Sigmoid colon (tissue), 7 donors: ENCODE measurements at regions of chr12 and their contacts with region 1.

Region 1: DNA sequence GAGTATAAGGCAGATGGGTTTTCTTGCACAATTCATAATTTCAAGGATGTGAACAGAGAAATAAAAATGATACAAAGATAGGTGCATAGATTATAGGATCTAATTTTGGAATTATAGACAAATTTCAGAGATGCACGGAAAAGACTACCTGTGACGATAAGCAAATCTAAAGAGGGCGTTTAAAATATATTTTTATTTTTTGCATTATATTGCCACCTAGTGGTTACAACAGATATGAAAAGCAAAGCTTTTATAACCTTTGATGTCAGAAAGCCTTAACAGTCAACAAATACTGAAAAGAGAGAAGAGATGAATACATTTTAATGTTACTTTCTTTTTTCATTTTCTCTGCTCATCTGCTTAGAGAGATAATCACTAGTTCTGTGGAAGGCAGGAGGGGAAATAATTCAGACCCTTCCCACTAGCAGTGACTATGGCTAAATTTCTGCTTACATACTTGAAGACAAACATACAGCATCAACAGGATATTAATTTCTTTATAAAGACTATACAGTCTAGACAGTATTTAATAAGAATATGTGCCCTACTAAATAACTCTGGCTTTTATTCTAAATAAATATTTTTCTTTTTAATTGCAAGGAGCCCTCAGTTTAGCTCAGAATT is 46.3 kb downstream of the NTS start:
- DNase-seq: no peak
- H3K4me3 ChIP-seq: no peak overlapping the region
- H3K27ac ChIP-seq: no peak overlapping the region
- H3K4me1 ChIP-seq: no peaks in the 10 kb centered on the region
- H3K27me3 ChIP-seq: no peaks in the 10 kb centered on the region
- CTCF ChIP-seq: peak in 2 of 4 experiments; percentile 24 to 64
- EP300 ChIP-seq: no peak
- POLR2A ChIP-seq: no peak

Region 2: GRCh38 chr12:85468356-85469157 is 451.9 kb before region 1 on chr12:
- intact Hi-C with region 1: loop called (anchors 5 kb)
- DNase-seq: no peak
- H3K4me3 ChIP-seq: peak overlapping the region; percentile 28 to 50 (median 42)
- H3K27ac ChIP-seq: no peak overlapping the region
- H3K4me1 ChIP-seq: no peaks in the 10 kb centered on the region
- H3K27me3 ChIP-seq: no peaks in the 10 kb centered on the region
- CTCF ChIP-seq: peak; percentile 42 to 69 (median 52)
- EP300 ChIP-seq: no peak
- POLR2A ChIP-seq: no peak